ENCODE measurements at regions of chr9 and their contacts with region 1.

Region 1: GRCh38 chr9:101458955-101459631 is 23.5 kb upstream of the ALDOB start:
- DNase-seq: peak; percentile 56
- H3K4me3 ChIP-seq: no peak overlapping the region
- H3K27ac ChIP-seq: no peak overlapping the region
- H3K27me3 ChIP-seq: no peaks in the 10 kb centered on the region
- CTCF ChIP-seq: peak; percentile 94

Region 2: GRCh38 chr9:101299901-101300300 is 159.2 kb before region 1 on chr9:
- CTCF ChIA-PET with region 1: no interaction called
- POLR2A ChIA-PET with region 1: no interaction called
- DNase-seq: no peak
- H3K4me3 ChIP-seq: no peak overlapping the region
- H3K27ac ChIP-seq: no peak overlapping the region
- H3K27me3 ChIP-seq: no peaks in the 10 kb centered on the region
- CTCF ChIP-seq: no peak

Region 3: GRCh38 chr9:101472891-101473290 is 13.8 kb after region 1 on chr9:
- CTCF ChIA-PET with region 1: interaction called, 17 read pairs
- POLR2A ChIA-PET with region 1: no interaction called
- DNase-seq: no peak
- H3K4me3 ChIP-seq: no peak overlapping the region
- H3K27ac ChIP-seq: no peak overlapping the region
- H3K27me3 ChIP-seq: no peaks in the 10 kb centered on the region
- CTCF ChIP-seq: no peak

Region 4: DNA sequence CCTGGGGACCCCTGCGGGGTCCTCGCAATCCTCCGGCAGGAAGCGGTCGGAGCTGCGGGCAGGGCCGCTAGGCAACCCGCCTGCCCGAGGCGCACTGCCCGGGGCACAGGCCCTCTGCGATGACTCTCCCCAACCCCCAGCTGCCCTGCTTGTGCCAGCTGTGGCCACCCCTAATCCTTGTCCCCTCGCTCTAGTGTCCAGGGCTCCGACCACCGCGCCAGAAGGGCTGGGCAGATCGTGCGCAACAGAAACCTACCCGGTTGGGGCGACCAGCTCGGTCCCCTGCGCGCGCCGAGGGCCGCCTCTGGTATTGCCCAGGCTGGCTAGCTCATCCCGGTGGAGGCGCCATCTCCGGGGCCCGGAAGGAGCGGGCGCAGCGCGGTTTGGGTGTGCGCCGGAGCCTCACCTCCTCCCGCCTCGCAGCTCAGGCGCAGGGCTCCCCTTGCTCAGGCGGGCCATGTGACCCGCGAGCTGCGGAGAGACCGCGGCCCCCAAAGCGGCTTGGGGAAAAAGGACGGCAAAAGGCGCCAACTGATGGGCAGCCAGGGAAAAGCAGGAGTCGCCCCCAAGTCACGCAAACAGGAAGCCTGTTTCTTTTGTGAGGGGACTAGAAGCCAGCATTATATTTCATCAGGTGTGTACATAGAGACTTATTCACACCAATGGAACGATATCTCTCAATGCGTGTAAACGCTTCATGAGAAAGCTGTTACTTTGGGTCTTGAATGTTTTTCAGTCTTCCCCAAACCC is 27.8 kb after region 1 on chr9:
- CTCF ChIA-PET with region 1: interaction called, 93 read pairs
- POLR2A ChIA-PET with region 1: interaction called, 4 read pairs
- DNase-seq: no peak
- H3K4me3 ChIP-seq: peak overlapping the region; percentile 76
- H3K27ac ChIP-seq: no peak overlapping the region
- H3K27me3 ChIP-seq: no peaks in the 10 kb centered on the region
- CTCF ChIP-seq: peak; percentile 40

Region 5: GRCh38 chr9:101514071-101514470 is 55.0 kb after region 1 on chr9:
- CTCF ChIA-PET with region 1: interaction called, 11 read pairs
- POLR2A ChIA-PET with region 1: no interaction called
- DNase-seq: no peak
- H3K4me3 ChIP-seq: no peak overlapping the region
- H3K27ac ChIP-seq: no peak overlapping the region
- H3K27me3 ChIP-seq: no peaks in the 10 kb centered on the region
- CTCF ChIP-seq: no peak

Region 6: GRCh38 chr9:101543098-101543735 is 84.1 kb after region 1 on chr9:
- CTCF ChIA-PET with region 1: interaction called, 600 read pairs
- POLR2A ChIA-PET with region 1: no interaction called
- DNase-seq: no peak
- H3K4me3 ChIP-seq: no peak overlapping the region
- H3K27ac ChIP-seq: no peak overlapping the region
- H3K27me3 ChIP-seq: no peaks in the 10 kb centered on the region
- CTCF ChIP-seq: no peak

Measured in AG04450 (cell line).